ENCODE measurements at regions of chr1 and their contacts with region 1.

Region 1: GRCh38 chr1:88877382-88877825 is 14.0 kb downstream of the GTF2B start:
- DNase-seq: no peak
- H3K4me3 ChIP-seq: no peak overlapping the region
- H3K27ac ChIP-seq: no peak overlapping the region
- H3K4me1 ChIP-seq: no peaks in the 10 kb centered on the region
- H3K27me3 ChIP-seq: no peaks in the 10 kb centered on the region
- CTCF ChIP-seq: peak; percentile 56

Region 2: DNA sequence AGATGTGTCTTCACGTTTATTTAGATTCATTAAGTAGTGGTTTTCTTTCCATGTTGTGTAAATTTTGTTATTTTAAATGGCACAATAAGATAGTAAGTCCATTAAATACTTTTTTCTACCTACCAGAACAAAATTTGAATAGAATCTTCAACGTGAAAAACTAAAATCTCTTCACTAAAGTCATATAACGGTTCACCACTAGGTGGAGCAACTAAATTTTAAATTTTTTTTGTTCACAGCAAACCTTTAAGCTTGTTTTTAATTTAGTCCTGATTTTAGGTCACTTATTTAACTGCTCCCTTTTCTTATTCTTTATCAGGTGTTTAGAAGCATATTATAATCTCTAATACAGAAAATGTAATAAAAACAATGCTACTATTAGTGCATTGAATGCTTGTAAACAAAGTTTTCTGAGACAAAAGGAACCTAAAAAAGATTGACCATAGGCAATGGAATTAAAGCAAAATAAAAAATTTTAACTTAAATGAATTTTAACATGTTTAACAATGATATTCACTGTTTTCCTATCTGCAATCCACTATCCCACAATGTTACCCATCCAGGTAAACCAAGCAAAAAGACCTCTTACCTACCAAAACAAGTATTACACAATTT is 221.6 kb before region 1 on chr1:
- intact Hi-C with region 1: loop called (anchors 10 kb)
- DNase-seq: no peak
- H3K4me3 ChIP-seq: no peak overlapping the region
- H3K27ac ChIP-seq: no peak overlapping the region
- H3K4me1 ChIP-seq: no peaks in the 10 kb centered on the region
- H3K27me3 ChIP-seq: no peaks in the 10 kb centered on the region
- CTCF ChIP-seq: peak; percentile 82

Region 3: DNA sequence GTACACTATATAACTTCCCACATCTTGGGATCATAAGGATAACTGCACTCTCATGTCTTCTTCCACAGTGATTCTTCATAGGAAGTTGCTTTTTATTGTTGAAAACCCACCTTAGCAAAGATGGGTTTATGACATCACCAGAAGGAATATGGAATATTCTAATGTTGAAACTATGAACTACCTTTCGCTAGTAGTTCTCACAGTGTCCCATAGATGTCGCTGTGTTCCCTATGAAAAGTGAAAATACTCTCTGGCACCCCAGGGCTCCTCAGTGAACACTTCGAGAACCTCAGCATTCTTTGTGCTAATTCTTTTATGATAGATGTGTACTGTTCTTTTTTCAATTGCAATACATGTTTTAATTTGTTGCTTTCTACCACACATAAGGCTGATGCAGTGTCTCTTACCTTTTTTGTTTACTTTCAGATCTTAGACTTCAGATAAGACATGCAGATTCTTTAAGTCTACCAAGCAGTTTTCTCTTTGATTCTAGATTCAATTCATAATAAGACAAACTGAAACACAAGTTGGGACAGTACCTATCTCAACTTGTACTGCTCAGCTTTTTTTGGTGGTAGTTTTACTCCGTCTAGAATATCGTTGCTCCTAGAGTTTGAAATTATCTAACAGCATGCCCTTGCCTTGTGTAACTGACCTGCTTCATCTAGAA is 76.9 kb before region 1 on chr1:
- intact Hi-C with region 1: loop called (anchors 10 kb)
- DNase-seq: peak; percentile 28
- H3K4me3 ChIP-seq: no peak overlapping the region
- H3K27ac ChIP-seq: no peak overlapping the region
- H3K4me1 ChIP-seq: no peaks in the 10 kb centered on the region
- H3K27me3 ChIP-seq: no peaks in the 10 kb centered on the region
- CTCF ChIP-seq: peak; percentile 59